ENCODE measurements at regions of chr15 and their contacts with region 1.

Region 1: GRCh38 chr15:58933281-58934113 is at the start of gene SLTM:
- DNase-seq: peak; percentile 90 to 95 (median 93)
- ATAC-seq: peak; percentile 95
- H3K4me3 ChIP-seq: peak within 1 kb of the TSS; percentile 91
- H3K4me3 Mint-ChIP-seq: peak within 1 kb of the TSS; percentile 91 to 100 (median 98)
- H3K27ac ChIP-seq: peak within 1 kb of the TSS; percentile 93
- H3K27ac Mint-ChIP-seq: peak within 1 kb of the TSS; percentile 98 to 100 (median 99)
- H3K4me1 ChIP-seq: peaks cover 19 to 21% of the 10 kb centered on the region in 2 donors
- H3K4me1 Mint-ChIP-seq: peaks cover 14 to 34% (median 27%) of the 10 kb centered on the region in 7 donors
- H3K27me3 ChIP-seq: no peaks in the 10 kb centered on the region
- H3K27me3 Mint-ChIP-seq: no peaks in the 10 kb centered on the region
- total RNA-seq, gene SLTM: 118 to 166 (median 159) TPM

Region 2: DNA sequence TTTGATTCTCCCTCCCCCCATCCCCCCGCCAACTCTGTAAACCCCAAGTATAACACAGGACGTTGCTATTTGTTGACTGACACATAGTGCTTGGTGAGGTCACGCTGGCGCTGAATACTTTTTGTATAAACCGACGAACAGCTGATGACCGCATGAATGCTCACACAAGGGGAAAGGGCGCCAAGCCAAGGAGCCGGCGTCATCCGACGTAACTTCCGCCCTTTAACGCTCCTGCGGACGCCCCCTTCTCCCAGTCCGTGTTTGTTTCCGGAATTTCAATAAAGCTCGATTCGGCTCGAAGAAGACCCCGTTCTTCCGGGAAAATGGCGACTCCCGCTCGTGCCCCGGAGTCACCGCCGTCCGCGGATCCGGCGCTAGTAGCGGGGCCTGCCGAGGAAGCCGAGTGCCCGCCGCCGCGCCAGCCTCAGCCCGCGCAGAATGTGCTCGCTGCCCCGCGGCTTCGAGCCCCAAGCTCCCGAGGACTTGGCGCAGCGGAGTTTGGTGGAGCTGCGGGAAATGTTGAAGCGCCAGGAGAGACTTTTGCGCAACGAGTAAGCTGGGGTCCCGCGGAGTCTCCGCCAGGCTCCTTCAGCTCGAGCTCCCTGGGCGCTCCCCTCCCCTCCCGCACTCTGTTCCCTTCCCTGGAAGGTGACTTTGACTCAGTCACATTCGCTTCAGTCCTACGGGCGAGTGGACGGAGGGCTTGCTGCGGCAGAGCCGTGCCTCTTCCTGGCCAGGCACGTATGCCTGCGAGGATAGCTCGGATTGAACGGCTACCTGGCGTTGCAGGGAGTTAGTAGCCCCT is 1226.9 kb before region 1 on chr15 and contains the start of gene POLR2M:
- CTCF ChIA-PET with region 1: no interaction called
- POLR2A ChIA-PET with region 1: no interaction called
- intact Hi-C with region 1: loop called in 1 of 2 experiments (anchors 10 kb)
- DNase-seq: peak; percentile 67 to 97 (median 91)
- ATAC-seq: peak; percentile 94
- H3K4me3 ChIP-seq: peak within 1 kb of the TSS; percentile 88
- H3K4me3 Mint-ChIP-seq: peak within 1 kb of the TSS; percentile 83 to 93 (median 89)
- H3K27ac ChIP-seq: peak within 1 kb of the TSS; percentile 92
- H3K27ac Mint-ChIP-seq: peak within 1 kb of the TSS; percentile 63 to 99 (median 97)
- H3K4me1 ChIP-seq: peaks cover 17 to 38% of the 10 kb centered on the region in 2 donors
- H3K4me1 Mint-ChIP-seq: peaks cover 51 to 96% (median 94%) of the 10 kb centered on the region in 7 donors
- H3K27me3 ChIP-seq: no peaks in the 10 kb centered on the region
- H3K27me3 Mint-ChIP-seq: peaks cover 0 to 3% (median 0%) of the 10 kb centered on the region in 5 donors
- total RNA-seq, gene POLR2M: 67.0 to 105 (median 82.9) TPM

Region 3: GRCh38 chr15:58770857-58771620 is 162.5 kb before region 1 on chr15 and contains the start of gene MINDY2:
- CTCF ChIA-PET with region 1: no interaction called
- POLR2A ChIA-PET with region 1: interaction called, 4 read pairs
- intact Hi-C with region 1: loop called (anchors 1 kb)
- DNase-seq: peak; percentile 85 to 92 (median 90)
- ATAC-seq: peak; percentile 98
- H3K4me3 ChIP-seq: peak within 1 kb of the TSS; percentile 83
- H3K4me3 Mint-ChIP-seq: peak within 1 kb of the TSS in 2 of 10 donors; percentile 2 to 20
- H3K27ac ChIP-seq: peak within 1 kb of the TSS; percentile 90
- H3K27ac Mint-ChIP-seq: peak within 1 kb of the TSS in 7 of 9 donors; percentile 86 to 96 (median 93)
- H3K4me1 ChIP-seq: peaks cover 24 to 32% of the 10 kb centered on the region in 2 donors
- H3K4me1 Mint-ChIP-seq: peaks cover 0 to 21% (median 9%) of the 10 kb centered on the region in 7 donors
- H3K27me3 ChIP-seq: no peaks in the 10 kb centered on the region
- H3K27me3 Mint-ChIP-seq: no peaks in the 10 kb centered on the region
- total RNA-seq, gene MINDY2: 10.4 to 16.6 (median 11.5) TPM

Region 4: DNA sequence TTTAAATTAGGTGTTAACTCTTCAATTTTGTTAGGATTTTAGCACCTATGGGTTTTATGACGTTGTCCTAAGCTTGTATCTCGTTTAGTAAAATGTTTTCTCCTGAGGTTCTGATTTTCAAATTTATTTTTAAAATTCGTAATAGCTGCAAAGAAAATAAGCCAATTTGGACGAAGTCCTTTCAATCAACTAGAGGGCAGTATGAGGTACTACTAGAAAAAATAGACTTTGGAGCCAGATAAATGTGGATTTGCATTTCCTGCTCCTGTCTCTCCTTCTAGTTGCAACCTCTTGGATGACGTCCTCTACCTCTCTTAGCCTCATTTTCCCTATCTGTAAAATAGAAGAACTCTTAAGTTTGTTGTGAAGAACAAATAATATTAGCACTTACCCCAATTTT is 81.2 kb before region 1 on chr15:
- CTCF ChIA-PET with region 1: no interaction called
- POLR2A ChIA-PET with region 1: no interaction called
- intact Hi-C with region 1: no loop called
- DNase-seq: no peak
- ATAC-seq: no peak
- H3K4me3 ChIP-seq: no peak overlapping the region
- H3K4me3 Mint-ChIP-seq: no peak overlapping the region
- H3K27ac ChIP-seq: no peak overlapping the region
- H3K27ac Mint-ChIP-seq: no peak overlapping the region
- H3K4me1 ChIP-seq: no peaks in the 10 kb centered on the region
- H3K4me1 Mint-ChIP-seq: peaks cover 0 to 2% (median 0%) of the 10 kb centered on the region in 7 donors
- H3K27me3 ChIP-seq: no peaks in the 10 kb centered on the region
- H3K27me3 Mint-ChIP-seq: no peaks in the 10 kb centered on the region

Region 5: DNA sequence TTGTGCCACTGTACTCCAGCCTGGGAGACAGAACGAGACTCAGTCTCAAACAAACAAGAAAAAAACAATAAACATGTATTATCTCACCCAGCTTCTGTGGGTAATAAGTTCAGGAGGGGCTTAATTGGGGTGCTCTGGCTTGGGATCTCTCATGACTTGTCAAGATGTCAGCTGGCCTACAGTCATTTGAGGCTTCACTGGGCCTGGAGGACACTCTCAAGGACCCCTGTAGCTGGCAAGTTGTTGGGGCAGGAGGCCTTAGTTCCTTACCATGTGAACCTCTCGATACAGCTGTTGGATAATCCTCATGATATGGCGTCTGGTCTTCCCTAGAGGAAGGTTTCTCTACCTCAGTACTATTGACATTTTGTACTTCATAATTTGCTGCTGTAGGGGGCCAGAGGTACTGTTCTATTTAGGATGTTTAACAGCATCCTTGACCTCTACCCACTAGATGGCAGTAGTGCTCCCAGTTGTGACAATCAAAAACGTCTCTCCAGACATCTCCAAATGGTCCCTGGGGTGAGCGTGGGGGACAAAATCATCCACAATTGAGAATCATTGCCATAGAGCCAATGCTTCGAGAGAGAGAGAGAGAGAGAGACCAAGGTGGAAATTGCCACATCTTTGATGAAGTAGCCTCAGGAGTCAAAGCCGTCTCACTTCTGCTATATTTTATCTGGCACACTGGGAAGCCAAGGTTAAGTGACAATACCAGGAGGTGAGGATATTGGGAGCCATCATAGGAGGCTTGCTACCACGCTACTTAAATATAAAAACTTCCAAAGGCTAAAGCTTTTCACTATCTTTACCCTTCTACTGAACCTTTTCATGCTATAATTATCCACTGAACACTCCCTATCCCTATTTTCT is 23.8 kb after region 1 on chr15:
- CTCF ChIA-PET with region 1: interaction called, 4 read pairs
- POLR2A ChIA-PET with region 1: interaction called, 3 read pairs
- intact Hi-C with region 1: loop called in 1 of 2 experiments (anchors 1 kb)
- DNase-seq: peak in 8 of 9 donors; percentile 37 to 69 (median 63)
- ATAC-seq: peak; percentile 99
- H3K4me3 ChIP-seq: no peak overlapping the region
- H3K4me3 Mint-ChIP-seq: peak overlapping the region in 1 of 10 donors; percentile 39
- H3K27ac ChIP-seq: no peak overlapping the region
- H3K27ac Mint-ChIP-seq: no peak overlapping the region
- H3K4me1 ChIP-seq: no peaks in the 10 kb centered on the region
- H3K4me1 Mint-ChIP-seq: peaks cover 0 to 14% (median 8%) of the 10 kb centered on the region in 7 donors
- H3K27me3 ChIP-seq: peaks cover 0 to 3% of the 10 kb centered on the region in 2 donors
- H3K27me3 Mint-ChIP-seq: peaks cover 0 to 11% (median 0%) of the 10 kb centered on the region in 5 donors

Region 6: GRCh38 chr15:59104912-59105732 is 171.6 kb after region 1 on chr15 and contains the start of gene CCNB2:
- CTCF ChIA-PET with region 1: no interaction called
- POLR2A ChIA-PET with region 1: no interaction called
- intact Hi-C with region 1: loop called in 1 of 2 experiments (anchors 1 kb)
- DNase-seq: peak; percentile 63 to 91 (median 87)
- ATAC-seq: peak; percentile 100
- H3K4me3 ChIP-seq: peak within 1 kb of the TSS; percentile 77
- H3K4me3 Mint-ChIP-seq: peak within 1 kb of the TSS; percentile 89 to 100 (median 93)
- H3K27ac ChIP-seq: peak within 1 kb of the TSS; percentile 71
- H3K27ac Mint-ChIP-seq: peak within 1 kb of the TSS; percentile 94 to 100 (median 98)
- H3K4me1 ChIP-seq: peaks cover 7 to 11% of the 10 kb centered on the region in 2 donors
- H3K4me1 Mint-ChIP-seq: peaks cover 9 to 49% (median 13%) of the 10 kb centered on the region in 7 donors
- H3K27me3 ChIP-seq: no peaks in the 10 kb centered on the region
- H3K27me3 Mint-ChIP-seq: no peaks in the 10 kb centered on the region
- total RNA-seq, gene CCNB2: 0.27 to 52.2 (median 0.41) TPM

Region 7: DNA sequence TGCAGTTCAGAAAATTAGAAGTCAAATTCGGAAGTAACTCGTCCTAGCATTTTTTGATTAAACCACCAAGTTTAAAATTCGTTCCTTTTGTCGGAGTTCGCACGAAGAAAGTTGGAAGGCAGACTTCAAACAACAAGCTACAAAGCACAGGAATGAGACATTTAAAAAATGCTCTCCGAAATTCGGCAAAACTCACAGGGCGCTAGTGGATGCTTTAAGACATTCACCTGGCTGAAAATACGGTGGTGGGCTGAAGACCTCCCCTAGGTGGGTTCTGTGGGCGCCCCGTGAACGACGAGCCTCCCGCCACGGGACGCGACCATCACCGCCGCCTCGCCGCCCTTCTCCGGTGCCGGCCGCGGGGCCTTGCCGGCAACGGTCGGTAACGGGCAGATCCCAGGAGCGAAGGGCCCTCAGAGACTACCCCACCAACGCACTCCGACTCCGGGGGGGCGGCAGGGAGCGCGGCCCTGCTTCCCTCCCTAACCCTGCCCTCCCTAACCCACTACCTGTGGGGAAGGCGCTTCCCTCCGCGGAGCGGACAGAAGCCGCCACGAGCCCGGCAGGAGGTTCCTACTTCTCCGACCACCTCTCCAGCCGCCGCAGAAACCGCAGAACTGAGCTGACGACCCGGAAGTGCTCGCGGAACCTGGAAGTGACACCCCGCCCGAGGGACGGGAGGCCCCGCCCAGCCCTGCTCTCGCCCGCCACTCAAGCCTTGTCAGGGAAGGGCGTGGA is 723.6 kb after region 1 on chr15 and contains the start of gene GTF2A2:
- CTCF ChIA-PET with region 1: no interaction called
- POLR2A ChIA-PET with region 1: no interaction called
- intact Hi-C with region 1: loop called (anchors 1 to 2 kb)
- DNase-seq: peak; percentile 81 to 95 (median 89)
- ATAC-seq: peak; percentile 99
- H3K4me3 ChIP-seq: peak within 1 kb of the TSS; percentile 77
- H3K4me3 Mint-ChIP-seq: peak within 1 kb of the TSS in 7 of 10 donors; percentile 18 to 52 (median 26)
- H3K27ac ChIP-seq: peak within 1 kb of the TSS; percentile 89
- H3K27ac Mint-ChIP-seq: peak within 1 kb of the TSS in 4 of 9 donors; percentile 76 to 88 (median 78)
- H3K4me1 ChIP-seq: peaks cover 18% of the 10 kb centered on the region in 2 donors
- H3K4me1 Mint-ChIP-seq: peaks cover 4 to 17% (median 11%) of the 10 kb centered on the region in 7 donors
- H3K27me3 ChIP-seq: no peaks in the 10 kb centered on the region
- H3K27me3 Mint-ChIP-seq: no peaks in the 10 kb centered on the region
- total RNA-seq, gene GTF2A2: 46.6 to 124 (median 50.1) TPM